Ovary (tissue), 10 donors: ENCODE measurements at regions of chr12 and their contacts with region 1.

Region 1: DNA sequence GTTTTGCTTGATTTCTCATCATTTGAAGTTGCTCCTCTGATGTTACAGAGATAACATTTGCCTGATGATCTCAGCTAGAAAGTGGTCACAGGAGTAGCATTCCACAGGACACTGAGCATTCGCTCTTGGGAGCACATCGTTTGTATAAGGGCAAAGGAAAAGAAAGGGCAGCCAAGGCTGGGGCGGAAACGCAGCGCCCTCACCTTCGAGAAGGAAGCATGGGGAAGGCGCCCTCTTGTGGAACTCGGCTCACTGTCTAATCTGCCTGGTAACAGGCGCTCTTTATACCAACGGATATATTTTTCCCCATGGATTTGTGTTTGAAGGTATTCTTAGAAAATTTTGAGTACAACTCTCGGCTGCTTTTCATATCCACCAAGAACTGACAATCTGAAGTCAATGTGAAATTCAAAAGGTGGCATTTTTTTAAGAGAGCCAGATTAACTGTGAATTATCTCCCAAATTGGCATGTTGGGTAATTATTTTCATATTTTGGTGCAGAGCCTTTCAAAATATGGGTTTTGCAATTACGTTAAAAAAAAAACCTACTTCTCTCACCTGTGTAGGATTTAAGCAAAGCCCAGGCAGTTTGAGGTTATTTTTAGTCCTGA is 172.7 kb downstream of the CAND1 start:
- DNase-seq: peak; percentile 84 to 91 (median 86)
- H3K4me3 ChIP-seq: no peak overlapping the region
- H3K27ac ChIP-seq: no peak overlapping the region
- H3K4me1 ChIP-seq: peaks cover 2% of the 10 kb centered on the region
- H3K27me3 ChIP-seq: no peaks in the 10 kb centered on the region
- CTCF ChIP-seq: peak; percentile 57 to 68 (median 60)
- EP300 ChIP-seq: no peak
- POLR2A ChIP-seq: no peak

Region 2: GRCh38 chr12:67364228-67364627 is 77.6 kb before region 1 on chr12:
- intact Hi-C with region 1: loop called in 3 of 4 experiments (anchors 10 kb)
- DNase-seq: no peak
- H3K4me3 ChIP-seq: no peak overlapping the region
- H3K27ac ChIP-seq: no peak overlapping the region
- H3K4me1 ChIP-seq: no peaks in the 10 kb centered on the region
- H3K27me3 ChIP-seq: no peaks in the 10 kb centered on the region
- CTCF ChIP-seq: no peak
- EP300 ChIP-seq: no peak
- POLR2A ChIP-seq: no peak